Heart right ventricle (tissue), 16 donors: ENCODE measurements at regions of chr16 and their contacts with region 1.

Region 1: DNA sequence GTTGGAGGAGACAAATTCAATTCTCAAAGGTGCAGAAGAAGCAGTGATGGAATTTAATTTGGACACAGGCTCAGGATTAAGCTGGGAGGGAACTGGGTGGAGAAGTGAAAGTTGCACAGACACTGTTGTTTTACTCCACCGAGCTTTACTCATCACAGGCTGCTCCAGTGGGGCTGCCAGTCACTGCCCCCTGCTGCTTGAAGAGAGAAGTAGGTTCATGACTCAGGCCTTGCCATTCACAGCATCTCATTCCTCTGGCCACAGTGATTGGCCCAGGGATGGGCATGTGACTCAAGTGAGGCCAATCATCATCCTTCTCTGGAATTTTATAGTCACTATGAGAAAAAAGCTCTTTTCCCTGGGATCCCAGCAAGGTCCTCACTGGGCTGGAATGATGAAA is 11.8 kb downstream of the GNAO1 start:
- DNase-seq: peak in 1 of 2 donors; percentile 18
- ATAC-seq: peak in 7 of 8 donors; percentile 43 to 81 (median 64)
- H3K4me3 ChIP-seq: no peak overlapping the region
- H3K27ac ChIP-seq: no peak overlapping the region
- H3K4me1 ChIP-seq: peaks cover 0 to 41% (median 16%) of the 10 kb centered on the region in 9 donors
- H3K27me3 ChIP-seq: no peaks in the 10 kb centered on the region
- CTCF ChIP-seq: peak in 7 of 9 donors; percentile 26 to 57 (median 40)

Region 2: GRCh38 chr16:55773859-55774549 is 429.0 kb before region 1 on chr16:
- intact Hi-C with region 1: no loop called
- DNase-seq: no peak
- ATAC-seq: peak in 2 of 8 donors; percentile 55 to 57
- H3K4me3 ChIP-seq: no peak overlapping the region
- H3K27ac ChIP-seq: no peak overlapping the region
- H3K4me1 ChIP-seq: no peaks in the 10 kb centered on the region
- H3K27me3 ChIP-seq: peaks cover 0 to 9% (median 0%) of the 10 kb centered on the region in 7 donors
- CTCF ChIP-seq: no peak

Region 3: GRCh38 chr16:55944377-55944802 is 258.7 kb before region 1 on chr16:
- intact Hi-C with region 1: loop called in 5 of 10 experiments (anchors 10 kb)
- DNase-seq: peak; percentile 59 to 72
- ATAC-seq: peak; percentile 84 to 93 (median 92)
- H3K4me3 ChIP-seq: no peak overlapping the region
- H3K27ac ChIP-seq: peak overlapping the region in 1 of 10 donors; percentile 33
- H3K4me1 ChIP-seq: peaks cover 0 to 11% (median 0%) of the 10 kb centered on the region in 9 donors
- H3K27me3 ChIP-seq: peaks cover 0 to 8% (median 3%) of the 10 kb centered on the region in 7 donors
- CTCF ChIP-seq: peak; percentile 79 to 95 (median 92)

Region 4: GRCh38 chr16:56048425-56049105 is 154.5 kb before region 1 on chr16:
- intact Hi-C with region 1: loop called in 6 of 10 experiments (anchors 5 to 10 kb)
- DNase-seq: no peak
- ATAC-seq: no peak
- H3K4me3 ChIP-seq: no peak overlapping the region
- H3K27ac ChIP-seq: no peak overlapping the region
- H3K4me1 ChIP-seq: peaks cover 0 to 19% (median 8%) of the 10 kb centered on the region in 9 donors
- H3K27me3 ChIP-seq: peaks cover 0 to 10% (median 0%) of the 10 kb centered on the region in 7 donors
- CTCF ChIP-seq: no peak

Region 5: DNA sequence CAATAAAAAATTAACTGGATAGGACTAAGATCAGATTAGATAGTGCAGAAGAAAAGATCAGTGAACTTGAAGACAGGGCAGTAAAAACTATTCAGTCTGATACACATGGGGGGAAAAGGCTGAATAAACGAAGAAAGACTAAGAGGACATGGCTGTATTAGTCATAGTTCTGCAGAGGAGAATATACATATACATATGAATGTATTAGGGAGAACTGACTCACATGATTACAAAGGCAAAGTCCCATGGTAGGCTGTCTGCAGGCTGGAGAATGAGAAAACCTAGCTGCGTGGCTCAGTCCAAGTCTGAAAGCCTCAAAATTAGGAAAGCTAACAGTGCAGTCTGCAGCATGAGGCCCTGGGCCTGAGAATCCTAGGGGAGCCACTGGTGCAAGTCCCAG is 110.0 kb before region 1 on chr16:
- intact Hi-C with region 1: no loop called
- DNase-seq: no peak
- ATAC-seq: no peak
- H3K4me3 ChIP-seq: no peak overlapping the region
- H3K27ac ChIP-seq: no peak overlapping the region
- H3K4me1 ChIP-seq: no peaks in the 10 kb centered on the region
- H3K27me3 ChIP-seq: no peaks in the 10 kb centered on the region
- CTCF ChIP-seq: no peak